Upper lobe of right lung (tissue), 1 donor: ENCODE measurements at regions of chr6 and their contacts with region 1.

Region 1: DNA sequence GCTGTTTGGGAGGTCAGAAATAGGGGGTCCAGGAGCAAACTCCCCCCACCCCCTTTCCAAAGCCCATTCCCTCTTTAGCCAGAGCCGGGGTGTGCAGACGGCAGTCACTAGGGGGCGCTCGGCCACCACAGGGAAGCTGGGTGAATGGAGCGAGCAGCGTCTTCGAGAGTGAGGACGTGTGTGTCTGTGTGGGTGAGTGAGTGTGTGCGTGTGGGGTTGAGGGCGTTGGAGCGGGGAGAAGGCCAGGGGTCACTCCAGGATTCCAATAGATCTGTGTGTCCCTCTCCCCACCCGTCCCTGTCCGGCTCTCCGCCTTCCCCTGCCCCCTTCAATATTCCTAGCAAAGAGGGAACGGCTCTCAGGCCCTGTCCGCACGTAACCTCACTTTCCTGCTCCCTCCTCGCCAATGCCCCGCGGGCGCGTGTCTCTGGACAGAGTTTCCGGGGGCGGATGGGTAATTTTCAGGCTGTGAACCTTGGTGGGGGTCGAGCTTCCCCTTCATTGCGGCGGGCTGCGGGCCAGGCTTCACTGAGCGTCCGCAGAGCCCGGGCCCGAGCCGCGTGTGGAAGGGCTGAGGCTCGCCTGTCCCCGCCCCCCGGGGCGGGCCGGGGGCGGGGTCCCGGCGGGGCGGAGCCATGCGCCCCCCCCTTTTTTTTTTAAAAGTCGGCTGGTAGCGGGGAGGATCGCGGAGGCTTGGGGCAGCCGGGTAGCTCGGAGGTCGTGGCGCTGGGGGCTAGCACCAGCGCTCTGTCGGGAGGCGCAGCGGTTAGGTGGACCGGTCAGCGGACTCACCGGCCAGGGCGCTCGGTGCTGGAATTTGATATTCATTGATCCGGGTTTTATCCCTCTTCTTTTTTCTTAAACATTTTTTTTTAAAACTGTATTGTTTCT is at the start of gene VEGFA:
- DNase-seq: peak; percentile 94
- ATAC-seq: peak; percentile 80
- H3K4me3 ChIP-seq: peak within 1 kb of the TSS; percentile 81
- H3K27ac ChIP-seq: peak within 1 kb of the TSS; percentile 88
- H3K4me1 ChIP-seq: peaks cover 22% of the 10 kb centered on the region
- H3K27me3 ChIP-seq: no peaks in the 10 kb centered on the region
- CTCF ChIP-seq: peak; percentile 96
- total RNA-seq, gene VEGFA: 231 TPM

Region 2: DNA sequence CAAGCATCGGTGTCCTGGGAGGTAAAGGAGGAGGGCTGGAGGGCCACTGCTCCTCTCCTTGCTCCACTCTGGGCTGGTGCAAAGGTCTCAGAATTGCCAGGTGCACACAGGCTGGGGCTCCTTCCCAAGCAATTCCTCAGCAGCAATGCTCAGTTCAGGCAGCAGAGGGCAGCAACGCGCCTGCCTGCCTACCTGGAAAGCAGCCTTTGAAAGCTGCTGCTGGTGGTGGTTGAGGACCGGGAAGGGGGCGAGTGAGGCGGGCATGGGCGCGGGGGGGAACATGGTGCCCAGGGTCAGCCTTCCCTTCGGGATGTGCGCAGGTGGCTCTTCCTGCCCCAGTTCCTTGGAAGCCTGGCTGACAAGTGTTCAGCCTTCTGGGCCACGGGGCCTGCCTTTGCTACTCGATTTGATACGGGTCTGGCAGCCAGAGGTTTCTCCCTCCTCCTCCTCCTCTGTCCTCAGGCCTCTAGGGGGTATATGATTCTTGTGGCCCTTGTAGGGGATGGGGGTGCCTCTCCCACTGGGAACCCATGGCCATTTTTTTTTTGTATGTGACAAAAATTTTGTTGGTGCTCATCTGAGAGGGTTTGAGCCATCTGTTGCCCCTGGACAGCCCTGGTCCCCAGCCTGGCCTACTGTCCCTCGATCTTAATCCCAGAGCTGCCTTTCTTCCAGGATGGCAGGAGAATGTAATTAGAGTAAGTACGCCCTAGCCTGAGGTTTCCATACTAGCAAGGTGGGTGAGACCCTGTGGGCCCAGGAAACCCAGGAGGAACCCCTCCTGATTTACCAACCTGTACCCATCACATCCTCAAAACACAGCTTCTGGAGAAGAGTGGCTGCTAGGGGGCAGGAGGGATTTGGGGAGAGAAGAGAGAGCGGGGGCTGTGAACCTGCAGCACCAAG is 102.3 kb before region 1 on chr6:
- intact Hi-C with region 1: loop called (anchors 10 kb)
- DNase-seq: peak; percentile 89
- ATAC-seq: peak; percentile 85
- H3K4me3 ChIP-seq: no peak overlapping the region
- H3K27ac ChIP-seq: no peak overlapping the region
- H3K4me1 ChIP-seq: peaks cover 32% of the 10 kb centered on the region
- H3K27me3 ChIP-seq: no peaks in the 10 kb centered on the region
- CTCF ChIP-seq: peak; percentile 97

Region 3: GRCh38 chr6:43990627-43991619 is 221.2 kb after region 1 on chr6:
- intact Hi-C with region 1: no loop called
- DNase-seq: peak; percentile 35
- ATAC-seq: no peak
- H3K4me3 ChIP-seq: no peak overlapping the region
- H3K27ac ChIP-seq: no peak overlapping the region
- H3K4me1 ChIP-seq: no peaks in the 10 kb centered on the region
- H3K27me3 ChIP-seq: no peaks in the 10 kb centered on the region
- CTCF ChIP-seq: no peak

Region 4: GRCh38 chr6:44074439-44075136 is 304.8 kb after region 1 on chr6:
- intact Hi-C with region 1: loop called (anchors 5 kb)
- DNase-seq: peak; percentile 82
- ATAC-seq: peak; percentile 74
- H3K4me3 ChIP-seq: no peak overlapping the region
- H3K27ac ChIP-seq: no peak overlapping the region
- H3K4me1 ChIP-seq: peaks cover 27% of the 10 kb centered on the region
- H3K27me3 ChIP-seq: peaks cover 7% of the 10 kb centered on the region
- CTCF ChIP-seq: peak; percentile 93